Endothelial cell of umbilical vein (primary cell): ENCODE measurements at regions of chr10 and their contacts with region 1.

Region 1: DNA sequence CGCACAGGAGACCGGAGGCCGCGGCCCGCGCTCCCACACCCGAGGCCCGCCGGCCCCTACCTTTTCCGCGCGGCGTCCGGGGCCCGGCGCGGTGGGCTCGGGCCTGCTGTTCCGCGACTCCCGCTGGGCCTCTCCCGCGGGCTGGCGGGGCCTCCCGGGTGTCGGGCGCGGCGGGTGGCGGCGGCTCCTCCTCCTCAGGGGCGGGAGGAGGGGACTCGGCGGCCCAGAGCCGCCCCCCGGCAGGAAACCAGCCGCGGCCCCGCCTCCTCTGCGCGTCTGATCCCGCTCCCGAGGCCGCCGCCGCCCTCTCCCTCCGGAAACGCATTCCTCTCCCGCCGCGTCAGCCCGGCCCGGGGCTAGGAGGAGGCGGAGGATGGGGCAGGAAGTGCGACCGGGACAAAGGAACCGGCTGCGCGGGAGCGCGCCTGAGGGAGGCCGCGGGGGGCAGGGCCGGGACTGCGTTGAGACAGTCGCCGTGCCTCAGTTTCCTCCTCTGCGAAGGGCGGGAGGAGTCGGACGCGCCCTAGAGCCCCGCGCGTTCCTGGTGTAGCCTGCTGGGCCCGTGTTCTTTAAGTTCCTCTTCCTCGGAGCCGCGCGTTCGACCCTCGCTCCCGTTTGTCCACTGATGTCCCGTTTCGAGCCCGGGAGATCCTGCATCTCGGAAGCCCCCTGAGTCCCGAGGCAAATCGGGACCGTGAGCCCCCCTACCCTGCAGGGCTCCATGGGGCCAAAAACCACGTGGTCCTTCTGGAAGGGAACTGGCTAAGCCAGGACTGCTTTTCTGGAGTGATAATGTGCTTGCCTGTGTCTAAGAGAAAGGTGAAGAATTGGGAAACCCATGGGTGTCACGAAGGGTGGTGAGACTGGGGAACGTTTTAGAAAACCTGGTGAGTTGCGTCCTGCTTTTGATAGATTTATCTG is at the start of gene ITGB1:
- DNase-seq: peak; percentile 96
- H3K4me3 ChIP-seq: peak within 1 kb of the TSS; percentile 99 to 100 (median 99)
- H3K27ac ChIP-seq: peak within 1 kb of the TSS; percentile 97
- H3K4me1 ChIP-seq: peaks cover 68% of the 10 kb centered on the region
- H3K27me3 ChIP-seq: no peaks in the 10 kb centered on the region
- CTCF ChIP-seq: no peak
- POLR2A ChIP-seq: peak; percentile 80
- total RNA-seq, gene ITGB1: 1,125 and 1,147 TPM in 2 replicates

Region 2: GRCh38 chr10:32445740-32446535 is 512.4 kb before region 1 on chr10 and contains the start of gene CCDC7:
- CTCF ChIA-PET with region 1: no interaction called
- POLR2A ChIA-PET with region 1: no interaction called
- dilution Hi-C with region 1: no loop called
- intact Hi-C with region 1: loop called (anchors 1 kb)
- DNase-seq: peak; percentile 93
- H3K4me3 ChIP-seq: peak within 1 kb of the TSS; percentile 47 to 91 (median 82)
- H3K27ac ChIP-seq: peak within 1 kb of the TSS; percentile 100
- H3K4me1 ChIP-seq: peaks cover 8% of the 10 kb centered on the region
- H3K27me3 ChIP-seq: peaks cover 2 to 16% of the 10 kb centered on the region in 2 experiments
- CTCF ChIP-seq: peak; percentile 53 to 63
- POLR2A ChIP-seq: peak; percentile 93
- total RNA-seq, gene CCDC7: 6.6 and 8.2 TPM in 2 replicates

Region 3: GRCh38 chr10:32795598-32796183 is 162.7 kb before region 1 on chr10:
- CTCF ChIA-PET with region 1: no interaction called
- POLR2A ChIA-PET with region 1: no interaction called
- dilution Hi-C with region 1: no loop called
- intact Hi-C with region 1: loop called (anchors 5 kb)
- DNase-seq: peak; percentile 55
- H3K4me3 ChIP-seq: no peak overlapping the region
- H3K27ac ChIP-seq: no peak overlapping the region
- H3K4me1 ChIP-seq: no peaks in the 10 kb centered on the region
- H3K27me3 ChIP-seq: peaks cover 0 to 2% of the 10 kb centered on the region in 2 experiments
- CTCF ChIP-seq: peak; percentile 39 to 45
- POLR2A ChIP-seq: no peak

Region 4: DNA sequence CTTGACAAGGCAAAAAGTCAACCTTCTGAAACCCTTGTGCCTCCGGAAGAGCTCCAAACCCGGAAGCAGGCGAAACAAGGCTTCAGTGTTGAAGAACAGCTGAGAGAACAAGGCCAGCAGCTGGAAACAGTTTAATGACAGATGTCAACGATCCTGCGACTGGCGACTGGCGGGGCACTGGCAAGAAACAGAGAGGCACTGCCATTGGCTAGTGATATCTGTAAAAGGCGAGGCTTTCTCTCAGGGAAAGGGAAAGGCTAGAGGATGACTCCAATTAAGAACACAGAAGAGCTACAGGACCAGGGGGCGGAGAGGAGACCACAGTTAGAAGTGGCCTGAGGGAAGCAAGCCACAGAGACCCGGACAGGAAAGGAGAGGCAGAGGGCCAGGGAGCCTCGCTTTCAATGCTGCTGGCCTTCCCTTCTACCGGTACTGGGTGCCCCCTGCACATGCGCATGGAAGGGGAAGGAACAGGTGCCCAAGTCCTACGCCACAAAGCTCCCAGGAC is 19.7 kb before region 1 on chr10:
- CTCF ChIA-PET with region 1: interaction called, 6 read pairs
- POLR2A ChIA-PET with region 1: no interaction called
- dilution Hi-C with region 1: no loop called
- intact Hi-C with region 1: loop called (anchors 1 kb)
- DNase-seq: no peak
- H3K4me3 ChIP-seq: peak overlapping the region in 1 of 3 experiments; percentile 3
- H3K27ac ChIP-seq: peak overlapping the region; percentile 53
- H3K4me1 ChIP-seq: peaks cover 49% of the 10 kb centered on the region
- H3K27me3 ChIP-seq: no peaks in the 10 kb centered on the region
- CTCF ChIP-seq: no peak
- POLR2A ChIP-seq: no peak

Region 5: DNA sequence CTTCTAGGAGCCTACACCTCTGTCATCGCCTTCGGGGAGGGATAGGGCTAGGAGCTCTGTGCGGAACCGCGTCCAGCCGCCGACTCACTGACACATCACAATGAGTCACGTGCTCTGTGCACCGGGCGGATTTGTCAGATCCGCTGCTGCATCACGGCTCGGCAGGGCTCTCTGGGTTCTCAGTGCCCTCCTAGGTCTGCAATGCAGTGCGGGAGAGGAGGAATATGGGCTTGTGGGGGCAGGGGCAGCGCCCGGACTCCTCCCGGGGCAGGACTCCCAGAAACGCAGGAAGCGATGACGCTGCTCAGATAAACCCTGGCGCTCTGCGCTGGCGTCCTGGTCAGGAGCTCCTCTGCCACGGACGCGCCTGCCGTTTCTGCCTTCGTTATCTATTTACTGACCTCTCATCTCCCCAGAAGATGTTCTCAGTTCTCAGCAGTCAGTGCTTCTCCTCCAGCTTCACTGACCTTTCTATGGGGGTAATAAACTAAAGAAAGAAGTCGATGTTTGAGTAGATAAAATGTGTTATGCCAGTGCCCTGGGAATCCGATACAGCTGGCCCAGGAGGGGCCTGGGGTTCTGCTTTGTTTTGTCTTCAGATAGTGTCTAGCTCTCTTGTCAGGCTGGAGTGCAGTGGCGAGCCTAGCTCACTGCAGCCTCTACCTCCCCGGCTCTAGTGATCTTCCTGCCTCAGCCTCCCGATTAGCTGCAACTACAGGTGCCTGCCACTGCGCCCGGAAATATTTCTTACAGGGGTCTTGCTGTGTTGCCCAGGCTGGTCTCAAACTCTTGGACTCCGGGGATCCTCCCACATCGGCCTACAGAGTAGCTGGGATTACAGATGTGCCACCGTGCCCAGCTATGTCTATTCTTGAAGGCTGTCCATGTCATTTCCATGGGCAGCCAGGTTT is 22.5 kb after region 1 on chr10:
- CTCF ChIA-PET with region 1: interaction called, 29 read pairs
- POLR2A ChIA-PET with region 1: interaction called, 28 read pairs
- dilution Hi-C with region 1: no loop called
- intact Hi-C with region 1: loop called (anchors 1 kb)
- DNase-seq: peak; percentile 98
- H3K4me3 ChIP-seq: peak overlapping the region in 2 of 3 experiments; percentile 11 to 37
- H3K27ac ChIP-seq: peak overlapping the region; percentile 90
- H3K4me1 ChIP-seq: peaks cover 57% of the 10 kb centered on the region
- H3K27me3 ChIP-seq: no peaks in the 10 kb centered on the region
- CTCF ChIP-seq: no peak
- POLR2A ChIP-seq: peak; percentile 87

Region 6: GRCh38 chr10:33032654-33033151 is 74.4 kb after region 1 on chr10:
- CTCF ChIA-PET with region 1: no interaction called
- POLR2A ChIA-PET with region 1: no interaction called
- dilution Hi-C with region 1: no loop called
- intact Hi-C with region 1: loop called (anchors 2 kb)
- DNase-seq: peak; percentile 96
- H3K4me3 ChIP-seq: no peak overlapping the region
- H3K27ac ChIP-seq: peak overlapping the region; percentile 67
- H3K4me1 ChIP-seq: peaks cover 16% of the 10 kb centered on the region
- H3K27me3 ChIP-seq: no peaks in the 10 kb centered on the region
- CTCF ChIP-seq: no peak
- POLR2A ChIP-seq: no peak

Region 7: DNA sequence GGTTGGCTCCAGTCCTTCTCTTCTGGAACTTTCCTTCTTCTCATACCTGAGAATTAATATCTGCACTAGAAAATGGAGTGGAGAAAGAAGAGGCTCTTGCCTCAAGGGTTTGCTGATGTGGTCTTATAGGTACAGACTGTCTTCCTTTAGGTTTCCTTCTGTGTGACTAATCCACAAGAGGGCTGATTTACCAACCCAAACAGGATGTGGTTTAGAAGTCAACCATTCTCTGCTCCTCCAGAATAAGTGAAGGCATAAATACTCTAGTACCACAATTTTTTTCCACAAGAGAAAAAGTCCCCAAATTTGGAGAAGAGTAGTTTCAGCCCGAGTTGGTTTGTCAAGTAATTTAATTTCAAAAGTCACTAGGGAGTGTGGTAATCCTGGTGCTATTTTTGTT is 290.3 kb after region 1 on chr10:
- CTCF ChIA-PET with region 1: no interaction called
- POLR2A ChIA-PET with region 1: no interaction called
- dilution Hi-C with region 1: no loop called
- intact Hi-C with region 1: loop called (anchors 5 kb)
- DNase-seq: peak; percentile 87
- H3K4me3 ChIP-seq: no peak overlapping the region
- H3K27ac ChIP-seq: peak overlapping the region; percentile 100
- H3K4me1 ChIP-seq: peaks cover 64% of the 10 kb centered on the region
- H3K27me3 ChIP-seq: no peaks in the 10 kb centered on the region
- CTCF ChIP-seq: no peak
- POLR2A ChIP-seq: peak; percentile 35